K562 (cell line): ENCODE measurements at regions of chr9 and their contacts with region 1.

Region 1: DNA sequence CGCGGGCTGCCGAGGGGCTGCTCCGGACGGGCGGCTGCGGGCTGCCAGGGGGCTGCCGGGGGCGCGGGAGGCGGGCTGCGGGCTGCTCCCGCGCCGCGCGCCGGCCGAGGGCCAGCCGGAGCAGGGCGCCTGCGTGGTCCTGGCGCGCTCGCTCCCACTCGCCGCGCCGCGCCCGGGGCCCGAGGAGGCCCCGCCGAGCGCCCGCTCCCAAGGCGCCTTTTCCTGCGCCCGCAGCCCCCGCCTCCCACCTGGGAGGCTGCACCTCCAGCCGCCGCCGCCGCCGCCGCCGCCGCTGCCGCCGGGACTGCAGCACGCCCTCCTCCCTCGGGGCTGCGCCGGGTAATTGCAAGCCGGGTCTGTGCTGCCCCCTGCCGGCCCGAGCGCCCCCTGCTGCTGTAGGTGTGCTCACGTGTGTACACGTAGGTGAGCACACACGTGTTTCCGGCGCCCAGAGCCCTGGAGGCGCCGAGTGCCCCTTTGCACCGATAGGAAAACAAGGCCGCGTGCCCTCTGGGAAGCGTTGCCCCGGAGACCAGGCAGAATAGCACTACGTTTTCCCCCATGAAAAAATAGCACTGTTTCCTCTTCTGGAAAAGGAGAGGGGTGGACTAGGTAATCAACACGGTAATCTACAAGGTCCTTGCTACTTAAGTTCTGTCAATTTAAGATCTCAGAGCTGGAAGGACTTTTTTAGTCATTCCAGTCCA is at the start of gene EPB41L4B:
- DNase-seq: peak; percentile 90 to 95 (median 92)
- ATAC-seq: peak; percentile 99
- H3K4me3 ChIP-seq: peak within 1 kb of the TSS; percentile 39
- H3K27ac ChIP-seq: no peak within 1 kb of the TSS
- H3K4me1 ChIP-seq: peaks cover 0 to 16% of the 10 kb centered on the region in 2 experiments; a peak in 3 of 5 replicates
- H3K27me3 ChIP-seq: peaks cover 37 to 51% of the 10 kb centered on the region in 2 experiments
- CTCF ChIP-seq: peak; percentile 81 to 97 (median 90)
- EP300 ChIP-seq: no peak
- POLR2A ChIP-seq: no peak
- RAD21 ChIP-seq: peak; percentile 83 to 88
- polyA plus RNA-seq, gene EPB41L4B: 0.13 to 0.21 TPM

Region 2: DNA sequence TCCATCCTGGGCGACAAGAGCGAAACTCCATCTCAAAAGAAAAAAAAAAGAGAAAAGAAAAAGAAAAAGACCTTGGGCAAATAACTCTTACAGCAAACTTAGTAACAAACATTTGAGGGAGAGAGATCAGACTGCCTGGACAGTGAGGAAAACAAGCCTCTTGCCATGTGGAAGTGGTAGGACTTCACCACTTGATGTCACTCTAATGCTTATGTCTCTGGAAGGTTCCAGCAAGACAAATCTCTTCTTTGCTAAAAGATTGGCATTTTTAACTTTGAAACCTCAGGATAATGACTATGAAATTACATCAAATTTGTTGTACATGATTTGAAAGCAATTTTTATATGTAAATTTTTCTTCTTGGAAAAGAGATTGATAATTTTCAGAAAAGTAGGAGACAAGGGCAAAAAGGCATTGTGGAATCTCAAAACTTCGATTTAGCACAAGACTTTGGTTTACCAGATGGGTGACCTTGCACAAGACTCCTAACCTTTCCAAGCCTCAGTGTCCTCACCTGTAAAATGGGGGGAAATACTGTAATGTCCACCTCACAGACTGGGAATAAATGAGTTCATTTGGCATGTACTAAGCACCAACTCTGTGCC is 470.5 kb before region 1 on chr9:
- CTCF ChIA-PET with region 1: interaction called, 3 read pairs
- POLR2A ChIA-PET with region 1: no interaction called
- in situ Hi-C with region 1: no loop called
- intact Hi-C with region 1: loop called (anchors 2 kb)
- DNase-seq: peak in 2 of 4 experiments; percentile 23 to 30
- ATAC-seq: peak; percentile 70
- H3K4me3 ChIP-seq: no peak overlapping the region
- H3K27ac ChIP-seq: no peak overlapping the region
- H3K4me1 ChIP-seq: peaks cover 0 to 9% of the 10 kb centered on the region in 2 experiments; a peak in 1 of 5 replicates
- H3K27me3 ChIP-seq: peaks cover 22 to 30% of the 10 kb centered on the region in 2 experiments
- CTCF ChIP-seq: peak; percentile 24 to 63 (median 45); a peak in 4 of 6 replicates
- EP300 ChIP-seq: no peak
- POLR2A ChIP-seq: no peak
- RAD21 ChIP-seq: peak; percentile 25 to 73; a peak in 3 of 4 replicates

Region 3: GRCh38 chr9:108874058-108874788 is 446.7 kb before region 1 on chr9:
- CTCF ChIA-PET with region 1: no interaction called
- POLR2A ChIA-PET with region 1: no interaction called
- in situ Hi-C with region 1: loop called (anchors 10 kb)
- intact Hi-C with region 1: no loop called
- DNase-seq: no peak
- ATAC-seq: no peak
- H3K4me3 ChIP-seq: no peak overlapping the region
- H3K27ac ChIP-seq: no peak overlapping the region
- H3K4me1 ChIP-seq: no peaks in the 10 kb centered on the region
- H3K27me3 ChIP-seq: no peaks in the 10 kb centered on the region
- CTCF ChIP-seq: no peak
- EP300 ChIP-seq: no peak
- POLR2A ChIP-seq: no peak
- RAD21 ChIP-seq: no peak

Region 4: GRCh38 chr9:108885643-108886348 is 435.1 kb before region 1 on chr9:
- CTCF ChIA-PET with region 1: interaction called, 6 read pairs
- POLR2A ChIA-PET with region 1: no interaction called
- in situ Hi-C with region 1: no loop called
- intact Hi-C with region 1: loop called (anchors 10 kb)
- DNase-seq: peak; percentile 48 to 88 (median 66)
- ATAC-seq: peak; percentile 92
- H3K4me3 ChIP-seq: no peak overlapping the region
- H3K27ac ChIP-seq: peak overlapping the region; percentile 50; the same call in 2 of the 3 replicates
- H3K4me1 ChIP-seq: peaks cover 3 to 10% of the 10 kb centered on the region in 2 experiments; a peak in 1 of 5 replicates
- H3K27me3 ChIP-seq: no peaks in the 10 kb centered on the region
- CTCF ChIP-seq: no peak
- EP300 ChIP-seq: no peak
- POLR2A ChIP-seq: no peak
- RAD21 ChIP-seq: peak in 1 of 2 experiments; percentile 23; a peak in 1 of 4 replicates

Region 5: GRCh38 chr9:109192732-109193361 is 128.0 kb before region 1 on chr9:
- CTCF ChIA-PET with region 1: interaction called, 4 read pairs
- POLR2A ChIA-PET with region 1: no interaction called
- in situ Hi-C with region 1: no loop called
- intact Hi-C with region 1: loop called (anchors 1 kb)
- DNase-seq: peak in 3 of 4 experiments; percentile 27 to 48 (median 39)
- ATAC-seq: peak; percentile 86
- H3K4me3 ChIP-seq: no peak overlapping the region
- H3K27ac ChIP-seq: no peak overlapping the region
- H3K4me1 ChIP-seq: no peaks in the 10 kb centered on the region
- H3K27me3 ChIP-seq: peaks cover 3 to 4% of the 10 kb centered on the region in 2 experiments; a peak in 2 of 5 replicates
- CTCF ChIP-seq: peak; percentile 60 to 74 (median 61)
- EP300 ChIP-seq: no peak
- POLR2A ChIP-seq: no peak
- RAD21 ChIP-seq: peak; percentile 26 to 65; a peak in 3 of 4 replicates

Region 6: DNA sequence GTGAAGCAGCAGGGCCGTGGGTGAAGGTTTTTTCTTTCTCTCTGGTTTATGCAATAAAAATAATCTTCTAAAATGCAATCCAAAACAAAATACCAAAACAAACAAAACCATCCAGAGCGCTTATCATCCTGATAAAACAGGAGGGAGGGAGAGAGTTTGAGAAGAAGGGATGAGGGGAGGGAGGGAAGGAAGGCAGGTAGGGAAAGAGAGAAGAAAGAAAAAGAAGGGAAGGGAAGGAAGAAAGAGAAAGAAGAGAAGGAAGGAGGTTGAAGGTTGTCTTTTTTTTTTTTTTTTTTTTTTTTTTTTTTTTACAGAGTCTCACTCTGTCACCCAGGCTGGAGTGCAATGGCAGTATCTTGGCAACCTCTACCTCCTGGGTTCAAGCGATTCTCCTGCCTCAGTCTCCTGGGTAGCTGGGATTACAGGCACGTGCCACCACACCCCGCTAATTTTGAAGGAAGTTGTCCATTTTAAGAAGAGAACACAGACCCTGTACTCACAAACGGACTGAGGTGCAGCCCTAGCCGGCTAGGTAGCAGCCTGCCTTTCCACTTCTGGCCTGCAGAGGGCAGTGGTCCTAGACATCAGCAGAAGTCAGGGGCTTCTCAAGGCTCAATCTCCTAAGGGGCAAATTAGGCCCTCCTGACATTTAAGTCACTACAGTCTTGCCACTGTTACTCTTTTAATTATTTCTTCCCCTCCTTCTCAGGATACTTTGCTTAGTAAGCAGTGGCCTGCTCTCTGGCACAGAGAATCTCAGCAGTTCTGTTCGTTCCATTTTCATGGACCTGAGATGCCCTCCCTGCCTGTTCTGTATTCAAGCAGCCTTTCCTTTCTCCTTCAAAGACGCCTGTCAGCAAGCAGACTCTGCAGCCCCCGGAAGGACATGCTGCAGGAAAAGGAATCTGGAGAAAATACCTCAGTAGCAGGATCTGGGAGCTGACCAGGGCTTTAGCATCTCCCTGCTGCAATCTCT is 76.5 kb before region 1 on chr9:
- CTCF ChIA-PET with region 1: interaction called, 3 read pairs
- POLR2A ChIA-PET with region 1: no interaction called
- in situ Hi-C with region 1: no loop called
- intact Hi-C with region 1: loop called (anchors 1 kb)
- DNase-seq: peak; percentile 67 to 80 (median 76)
- ATAC-seq: peak; percentile 97
- H3K4me3 ChIP-seq: no peak overlapping the region
- H3K27ac ChIP-seq: no peak overlapping the region
- H3K4me1 ChIP-seq: no peaks in the 10 kb centered on the region
- H3K27me3 ChIP-seq: peaks cover 5 to 9% of the 10 kb centered on the region in 2 experiments; a peak in 1 of 5 replicates
- CTCF ChIP-seq: peak; percentile 75 to 90 (median 78)
- EP300 ChIP-seq: no peak
- POLR2A ChIP-seq: no peak
- RAD21 ChIP-seq: peak; percentile 28 to 66; a peak in 3 of 4 replicates

Region 7: DNA sequence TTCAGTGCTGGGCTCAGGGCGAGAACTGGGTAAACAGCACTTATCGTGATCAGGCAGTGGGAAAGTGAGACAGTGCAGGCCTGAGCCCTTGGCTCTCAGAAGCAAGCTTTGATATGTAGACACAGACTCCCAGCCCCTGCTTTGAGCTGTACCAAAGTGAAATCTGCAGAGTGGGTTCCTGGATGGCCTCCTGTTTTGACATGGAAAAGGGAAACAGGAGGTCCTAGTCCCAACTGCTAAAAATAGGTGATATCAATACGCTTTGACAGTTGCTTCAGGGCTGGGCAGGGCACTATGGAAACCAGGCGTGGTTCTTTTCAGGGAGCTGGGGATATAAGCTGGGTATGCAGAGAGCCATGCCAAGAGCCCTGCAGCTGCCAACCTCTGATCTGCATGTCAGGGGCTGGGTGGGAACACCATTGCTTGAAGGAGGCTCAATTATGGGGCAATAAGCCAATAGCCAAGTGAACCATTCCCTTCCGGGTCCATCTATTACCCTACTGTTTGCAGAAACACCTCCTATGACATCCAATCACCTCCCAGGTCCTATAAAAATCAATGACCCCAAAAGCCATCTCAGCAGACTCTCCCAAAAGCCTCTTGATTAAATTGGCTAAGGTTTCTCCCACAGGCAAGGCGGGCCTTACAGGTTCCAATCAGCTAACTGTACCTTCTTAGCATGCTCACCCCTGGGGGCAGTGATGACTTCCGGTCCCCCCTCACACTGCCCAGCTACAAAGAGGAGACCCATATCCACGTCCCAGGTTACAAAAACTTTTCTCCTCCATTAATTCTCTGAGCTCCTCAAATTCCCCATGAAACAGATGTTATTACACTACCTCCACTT is 45.8 kb before region 1 on chr9:
- CTCF ChIA-PET with region 1: no interaction called
- POLR2A ChIA-PET with region 1: no interaction called
- in situ Hi-C with region 1: no loop called
- intact Hi-C with region 1: no loop called
- DNase-seq: no peak
- ATAC-seq: no peak
- H3K4me3 ChIP-seq: no peak overlapping the region
- H3K27ac ChIP-seq: no peak overlapping the region
- H3K4me1 ChIP-seq: peaks cover 0 to 3% of the 10 kb centered on the region in 2 experiments; a peak in 1 of 5 replicates
- H3K27me3 ChIP-seq: peaks cover 7 to 53% of the 10 kb centered on the region in 2 experiments; a peak in 4 of 5 replicates
- CTCF ChIP-seq: no peak
- EP300 ChIP-seq: no peak
- POLR2A ChIP-seq: no peak
- RAD21 ChIP-seq: no peak